ENCODE measurements at regions of chr10 and their contacts with region 1.

Region 1: GRCh38 chr10:43380610-43381222 is 9.3 kb downstream of the FXYD4 start:
- DNase-seq: peak in 2 of 4 experiments; percentile 45 to 50
- ATAC-seq: peak; percentile 75
- H3K4me3 ChIP-seq: no peak overlapping the region
- H3K27ac ChIP-seq: no peak overlapping the region
- H3K4me1 ChIP-seq: peaks cover 13 to 16% of the 10 kb centered on the region in 2 experiments; a peak in 4 of 5 replicates
- H3K27me3 ChIP-seq: no peaks in the 10 kb centered on the region
- CTCF ChIP-seq: peak in 2 of 3 experiments; percentile 49 to 51; a peak in 3 of 6 replicates
- EP300 ChIP-seq: peak; percentile 89
- POLR2A ChIP-seq: no peak
- RAD21 ChIP-seq: peak; percentile 40 to 45; a peak in 3 of 4 replicates

Region 2: DNA sequence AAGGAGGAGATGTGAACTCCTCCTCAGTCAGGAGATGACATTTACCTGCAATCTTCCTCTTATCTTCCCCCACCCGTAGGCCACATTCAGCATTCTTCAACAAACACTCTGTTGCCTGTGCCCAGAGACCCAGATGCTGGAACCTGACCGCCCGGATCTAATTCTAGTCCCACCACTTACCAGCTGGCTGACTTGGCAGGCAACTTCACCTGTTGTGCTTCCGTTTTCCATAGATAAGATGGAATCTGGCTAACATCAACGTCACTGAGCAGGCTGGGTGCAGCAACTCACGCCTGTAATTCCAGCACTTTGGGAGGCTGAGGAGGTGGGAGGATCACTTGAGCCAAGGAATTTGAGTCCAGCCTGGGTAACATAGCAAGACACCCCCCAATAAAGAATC is 30.6 kb before region 1 on chr10:
- CTCF ChIA-PET with region 1: no interaction called
- POLR2A ChIA-PET with region 1: no interaction called
- in situ Hi-C with region 1: no loop called
- intact Hi-C with region 1: no loop called
- DNase-seq: no peak
- ATAC-seq: no peak
- H3K4me3 ChIP-seq: no peak overlapping the region
- H3K27ac ChIP-seq: no peak overlapping the region
- H3K4me1 ChIP-seq: peaks cover 6 to 13% of the 10 kb centered on the region in 2 experiments
- H3K27me3 ChIP-seq: peaks cover 13 to 19% of the 10 kb centered on the region in 2 experiments; a peak in 4 of 5 replicates
- CTCF ChIP-seq: no peak
- EP300 ChIP-seq: no peak
- POLR2A ChIP-seq: no peak
- RAD21 ChIP-seq: no peak

Region 3: DNA sequence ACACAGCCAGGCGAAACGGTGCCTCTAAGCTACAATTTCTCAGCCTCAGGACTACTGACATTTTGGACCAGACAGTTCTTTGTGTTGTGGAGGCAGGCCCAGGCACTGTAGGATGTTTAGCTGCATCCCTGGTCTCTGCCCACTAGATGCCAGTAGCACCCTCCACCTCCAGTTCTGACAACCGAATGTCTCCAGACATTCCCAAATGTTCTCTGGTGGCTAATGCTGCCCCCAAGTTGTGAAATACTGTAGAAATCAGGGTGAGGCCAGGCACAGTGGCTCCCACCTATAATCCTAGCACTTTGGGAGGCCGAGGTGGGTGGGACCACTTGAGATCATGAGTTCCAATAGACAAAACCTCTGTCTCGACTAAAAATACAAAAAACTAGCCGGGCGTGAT is 10.0 kb after region 1 on chr10:
- CTCF ChIA-PET with region 1: no interaction called
- POLR2A ChIA-PET with region 1: interaction called, 73 read pairs
- in situ Hi-C with region 1: no loop called
- intact Hi-C with region 1: no loop called
- DNase-seq: no peak
- ATAC-seq: peak; percentile 24
- H3K4me3 ChIP-seq: no peak overlapping the region
- H3K27ac ChIP-seq: peak overlapping the region; percentile 3; the same call in 1 of the 3 replicates
- H3K4me1 ChIP-seq: peaks cover 39 to 45% of the 10 kb centered on the region in 2 experiments; a peak in 4 of 5 replicates
- H3K27me3 ChIP-seq: no peaks in the 10 kb centered on the region
- CTCF ChIP-seq: peak; percentile 57 to 72 (median 59)
- EP300 ChIP-seq: no peak
- POLR2A ChIP-seq: no peak
- RAD21 ChIP-seq: peak; percentile 46 to 59